Dendritic cell treated with granulocyte-macrophage colony-stimulating factor and Interleukin-4, amounts not matched to agents 40 ng/mL and 50 ng/mL, for 4 days (primary cell): ENCODE measurements at regions of chr11 and their contacts with region 1.

Region 1: GRCh38 chr11:18492888-18493287 is 33.9 kb downstream of the TSG101 start:
- H3K4me3 Mint-ChIP-seq: no peak overlapping the region
- H3K27ac Mint-ChIP-seq: no peak overlapping the region
- H3K4me1 Mint-ChIP-seq: no peaks in the 10 kb centered on the region
- H3K27me3 Mint-ChIP-seq: no peaks in the 10 kb centered on the region

Region 2: DNA sequence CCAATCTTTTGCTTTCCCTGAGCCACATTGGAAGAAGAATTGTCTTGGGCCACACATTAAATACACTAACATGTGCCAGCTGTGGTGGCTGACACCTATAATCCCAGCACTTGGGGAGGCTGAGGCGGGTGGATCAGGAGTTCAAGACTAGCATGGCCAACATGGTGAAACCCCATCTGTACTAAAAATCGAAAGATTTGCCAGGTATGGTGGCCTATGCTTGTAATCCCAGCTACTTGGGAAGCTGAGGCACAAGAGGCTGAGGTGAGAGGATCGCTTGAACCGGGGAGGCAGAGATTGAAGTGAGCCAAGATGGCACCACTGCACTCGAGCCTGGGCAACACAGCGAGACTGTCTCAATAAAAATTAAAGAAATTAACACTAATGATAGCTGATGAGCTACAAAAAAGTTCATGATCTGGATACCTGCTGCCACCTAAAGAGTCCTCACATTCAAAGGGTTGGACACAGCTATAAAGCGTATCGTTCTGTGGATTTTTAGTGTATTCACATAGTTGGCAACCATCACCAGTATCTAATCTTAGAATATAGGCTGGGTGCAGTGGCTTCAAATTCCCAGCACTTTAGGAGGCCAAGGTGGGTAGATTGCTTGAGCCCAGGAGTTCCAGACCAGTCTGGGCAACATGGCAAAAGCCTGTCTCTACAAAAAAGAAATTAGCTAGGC is 84.2 kb before region 1 on chr11:
- intact Hi-C with region 1: loop called (anchors 10 kb)
- H3K4me3 Mint-ChIP-seq: no peak overlapping the region
- H3K27ac Mint-ChIP-seq: no peak overlapping the region
- H3K4me1 Mint-ChIP-seq: peaks cover 20% of the 10 kb centered on the region
- H3K27me3 Mint-ChIP-seq: peaks cover 1% of the 10 kb centered on the region

Region 3: GRCh38 chr11:18548001-18548400 is 55.1 kb after region 1 on chr11:
- intact Hi-C with region 1: no loop called
- H3K4me3 Mint-ChIP-seq: no peak overlapping the region
- H3K27ac Mint-ChIP-seq: no peak overlapping the region
- H3K4me1 Mint-ChIP-seq: no peaks in the 10 kb centered on the region
- H3K27me3 Mint-ChIP-seq: no peaks in the 10 kb centered on the region